WTC11 (cell line): ENCODE measurements at regions of chr10 and their contacts with region 1.

Region 1: DNA sequence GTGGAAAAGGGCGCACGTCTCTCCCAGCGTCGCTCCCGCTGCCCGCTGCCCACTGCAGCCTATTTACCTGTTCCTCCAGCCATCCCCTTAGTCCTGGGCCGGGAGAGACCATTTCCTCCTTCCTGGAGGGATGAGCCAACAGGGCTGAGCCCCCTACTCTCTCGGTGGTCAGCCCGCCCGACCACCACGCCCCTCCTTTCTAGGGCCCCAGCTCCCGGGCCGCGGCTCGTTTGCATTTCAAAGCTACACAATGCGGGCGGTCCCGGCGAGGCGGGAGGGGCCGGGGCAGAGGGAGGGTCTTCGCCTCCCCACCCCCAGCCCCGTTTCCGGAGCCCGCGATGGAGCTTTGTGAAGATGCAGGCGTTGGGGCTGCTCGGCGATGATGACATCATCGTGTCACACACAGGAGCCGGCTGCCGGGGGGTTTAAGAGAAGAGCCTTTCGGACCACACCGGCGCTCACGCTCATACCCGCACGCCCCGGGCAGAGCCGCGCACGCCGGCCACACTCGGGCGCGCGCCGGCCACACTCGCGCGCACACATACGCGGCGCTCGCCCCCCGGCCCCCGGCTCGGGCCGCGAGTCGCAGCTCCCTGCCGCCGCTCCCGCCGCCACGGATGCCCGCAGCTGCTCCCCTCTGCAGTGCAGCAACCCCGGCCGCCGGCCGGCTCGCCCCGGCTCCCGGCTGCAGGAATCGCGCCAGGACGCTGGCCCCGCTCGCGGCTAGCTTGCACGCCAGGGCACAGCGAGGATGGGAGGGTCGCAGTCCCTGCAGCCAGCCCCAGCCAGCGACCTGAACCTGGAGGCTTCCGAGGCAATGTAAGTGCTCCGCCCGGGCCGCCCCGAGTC is 107.7 kb upstream of the BTBD16 start:
- DNase-seq: peak; percentile 92
- ATAC-seq: peak; percentile 78
- H3K4me3 Mint-ChIP-seq: peak overlapping the region; percentile 86
- H3K27ac Mint-ChIP-seq: peak overlapping the region; percentile 92
- H3K4me1 Mint-ChIP-seq: peaks cover 73% of the 10 kb centered on the region
- H3K27me3 Mint-ChIP-seq: peaks cover 8% of the 10 kb centered on the region; the same call in 1 of the 2 replicates
- CTCF ChIP-seq: no peak

Region 2: DNA sequence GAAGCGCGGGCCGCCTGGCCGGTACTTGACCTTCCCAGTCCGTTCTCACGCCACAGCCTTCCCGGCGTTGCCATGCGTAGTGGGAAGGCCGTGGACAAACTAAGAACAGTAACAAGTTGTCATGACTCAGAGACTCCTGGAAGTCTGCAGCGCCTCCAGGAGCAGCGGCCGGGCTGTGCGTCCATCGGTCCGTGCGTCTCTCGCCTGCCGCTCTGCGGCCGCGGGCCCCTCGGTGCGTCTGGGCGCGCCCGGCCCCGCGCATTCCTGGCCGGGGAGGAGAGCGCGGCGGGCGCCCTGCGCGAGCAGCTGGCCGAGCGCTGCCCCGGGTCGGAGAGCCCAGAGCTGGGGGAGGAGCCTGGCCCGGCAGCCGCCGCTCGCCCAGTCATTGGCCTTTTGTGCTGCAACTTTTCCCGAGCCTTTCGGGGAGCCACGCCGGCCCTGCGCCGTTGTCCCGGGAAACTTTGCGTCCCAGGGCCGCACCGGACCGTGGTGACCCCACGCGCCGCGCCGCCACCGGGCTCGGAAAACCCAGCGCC is 50.7 kb before region 1 on chr10:
- CTCF ChIA-PET with region 1: interaction called, 4 read pairs
- POLR2A ChIA-PET with region 1: interaction called, 15 read pairs
- DNase-seq: peak; percentile 76
- ATAC-seq: peak; percentile 92
- H3K4me3 Mint-ChIP-seq: peak overlapping the region; percentile 67
- H3K27ac Mint-ChIP-seq: no peak overlapping the region
- H3K4me1 Mint-ChIP-seq: peaks cover 36% of the 10 kb centered on the region
- H3K27me3 Mint-ChIP-seq: peaks cover 3% of the 10 kb centered on the region
- CTCF ChIP-seq: no peak

Region 3: DNA sequence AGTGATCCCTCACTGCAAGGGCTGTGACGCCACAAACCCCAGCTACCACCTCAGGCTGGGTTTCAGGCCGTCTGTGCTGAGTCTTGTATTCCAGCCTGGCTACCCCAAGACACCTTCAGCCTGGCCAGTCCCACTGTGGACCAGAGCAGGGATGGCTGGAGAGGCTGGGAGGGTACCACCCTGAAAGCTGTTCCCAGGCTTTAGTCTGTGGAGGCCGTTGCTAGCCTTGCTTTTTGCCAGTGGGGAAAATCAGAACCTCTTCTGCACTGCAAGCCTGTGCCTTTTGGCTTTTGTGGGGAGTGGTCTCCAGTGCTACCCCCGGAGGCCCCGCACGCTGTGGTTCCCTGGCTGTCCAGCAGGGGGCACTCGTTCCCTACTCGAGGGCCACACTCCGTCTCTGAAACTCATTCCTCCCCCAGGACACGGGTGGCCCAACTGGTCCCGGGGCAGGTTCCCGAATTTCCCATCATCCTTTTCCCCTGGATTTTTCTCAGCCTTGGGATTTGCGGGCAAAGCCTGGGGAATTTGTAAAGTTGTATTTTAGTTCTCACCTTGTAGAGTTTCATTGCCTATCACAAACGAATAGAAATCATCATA is 20.7 kb before region 1 on chr10:
- CTCF ChIA-PET with region 1: interaction called, 10 read pairs
- POLR2A ChIA-PET with region 1: interaction called, 4 read pairs
- DNase-seq: peak; percentile 90
- ATAC-seq: peak; percentile 85
- H3K4me3 Mint-ChIP-seq: no peak overlapping the region
- H3K27ac Mint-ChIP-seq: no peak overlapping the region; the same call in 1 of the 2 replicates
- H3K4me1 Mint-ChIP-seq: peaks cover 13% of the 10 kb centered on the region
- H3K27me3 Mint-ChIP-seq: no peaks in the 10 kb centered on the region; the same call in 1 of the 2 replicates
- CTCF ChIP-seq: peak; percentile 98

Region 4: GRCh38 chr10:122181055-122181732 is 17.8 kb after region 1 on chr10:
- CTCF ChIA-PET with region 1: interaction called, 11 read pairs
- POLR2A ChIA-PET with region 1: interaction called, 21 read pairs
- DNase-seq: no peak
- ATAC-seq: no peak
- H3K4me3 Mint-ChIP-seq: peak overlapping the region; percentile 33; the same call in 1 of the 2 replicates
- H3K27ac Mint-ChIP-seq: peak overlapping the region; percentile 80
- H3K4me1 Mint-ChIP-seq: peaks cover 78% of the 10 kb centered on the region
- H3K27me3 Mint-ChIP-seq: no peaks in the 10 kb centered on the region
- CTCF ChIP-seq: no peak

Region 5: GRCh38 chr10:122267849-122268737 is 104.7 kb after region 1 on chr10:
- CTCF ChIA-PET with region 1: interaction called, 10 read pairs
- POLR2A ChIA-PET with region 1: no interaction called
- DNase-seq: peak; percentile 80
- ATAC-seq: peak; percentile 96
- H3K4me3 Mint-ChIP-seq: no peak overlapping the region
- H3K27ac Mint-ChIP-seq: no peak overlapping the region
- H3K4me1 Mint-ChIP-seq: peaks cover 5% of the 10 kb centered on the region
- H3K27me3 Mint-ChIP-seq: no peaks in the 10 kb centered on the region; the same call in 1 of the 2 replicates
- CTCF ChIP-seq: peak; percentile 87